Activated CD8-positive, alpha-beta T cell treated with anti-CD3 and anti-CD28 coated beads for 36 hours (primary cell): ENCODE measurements at regions of chr12 and their contacts with region 1.

Region 1: GRCh38 chr12:4276524-4277204 is 3.1 kb downstream of the CCND2 start:
- DNase-seq: peak; percentile 92
- ATAC-seq: peak; percentile 24
- H3K4me3 Mint-ChIP-seq: peak overlapping the region; percentile 100
- H3K27ac Mint-ChIP-seq: peak overlapping the region; percentile 100
- H3K4me1 Mint-ChIP-seq: peaks cover 47% of the 10 kb centered on the region
- H3K27me3 Mint-ChIP-seq: no peaks in the 10 kb centered on the region
- CTCF ChIP-seq: peak; percentile 77

Region 2: GRCh38 chr12:3885277-3886094 is 391.2 kb before region 1 on chr12:
- CTCF ChIA-PET with region 1: interaction called, 72 read pairs
- POLR2A ChIA-PET with region 1: interaction called, 9 read pairs
- intact Hi-C with region 1: loop called (anchors 2 kb)
- DNase-seq: peak; percentile 56
- ATAC-seq: no peak
- H3K4me3 Mint-ChIP-seq: no peak overlapping the region
- H3K27ac Mint-ChIP-seq: no peak overlapping the region
- H3K4me1 Mint-ChIP-seq: peaks cover 5% of the 10 kb centered on the region
- H3K27me3 Mint-ChIP-seq: no peaks in the 10 kb centered on the region
- CTCF ChIP-seq: peak; percentile 96

Region 3: DNA sequence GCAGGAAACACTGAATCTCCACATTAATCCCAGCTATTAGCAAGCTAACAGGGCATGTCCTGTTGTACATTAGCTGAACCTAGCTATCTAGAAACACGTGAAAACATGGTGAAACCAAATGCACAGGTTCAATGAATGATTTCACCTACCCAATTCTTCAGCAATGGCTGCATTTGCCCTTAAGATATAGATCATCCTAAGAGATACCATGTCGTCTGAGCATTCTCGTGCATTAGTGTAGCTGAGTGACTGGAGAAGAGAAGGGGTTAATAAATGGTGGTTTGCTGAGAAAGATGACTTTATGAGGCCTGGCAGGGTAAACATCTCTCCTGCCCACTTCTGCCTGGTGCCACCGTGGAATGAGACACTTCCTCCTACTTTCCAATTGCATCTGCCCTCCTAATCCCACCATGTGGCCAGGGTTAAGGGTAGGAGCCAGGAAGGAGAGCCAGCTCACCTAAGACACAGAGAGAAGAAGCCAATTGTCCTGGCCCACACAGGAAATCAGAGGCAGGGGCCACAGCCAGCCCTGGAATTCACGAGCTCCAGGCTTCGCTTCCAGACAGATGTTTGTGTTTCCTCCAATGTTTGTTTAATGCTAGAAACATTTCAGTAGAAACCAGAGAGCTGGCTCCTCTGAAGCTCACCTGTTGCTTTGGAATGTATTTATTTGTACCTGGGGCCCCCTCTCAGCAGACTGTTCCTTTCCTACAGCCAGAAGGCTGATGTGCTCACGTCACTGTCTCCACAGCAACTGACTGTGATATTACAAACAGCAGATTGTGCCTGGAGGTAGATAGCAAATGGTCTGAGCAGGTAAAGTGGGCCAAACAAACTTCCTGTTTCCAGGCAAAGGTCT is 277.5 kb before region 1 on chr12:
- CTCF ChIA-PET with region 1: interaction called, 136 read pairs
- POLR2A ChIA-PET with region 1: interaction called, 10 read pairs
- intact Hi-C with region 1: loop called (anchors 5 kb)
- DNase-seq: no peak
- ATAC-seq: no peak
- H3K4me3 Mint-ChIP-seq: no peak overlapping the region
- H3K27ac Mint-ChIP-seq: no peak overlapping the region
- H3K4me1 Mint-ChIP-seq: peaks cover 27% of the 10 kb centered on the region
- H3K27me3 Mint-ChIP-seq: no peaks in the 10 kb centered on the region
- CTCF ChIP-seq: no peak

Region 4: GRCh38 chr12:4112734-4113325 is 163.8 kb before region 1 on chr12:
- CTCF ChIA-PET with region 1: interaction called, 50 read pairs
- POLR2A ChIA-PET with region 1: interaction called, 97 read pairs
- intact Hi-C with region 1: loop called (anchors 2 kb)
- DNase-seq: no peak
- ATAC-seq: peak; percentile 22
- H3K4me3 Mint-ChIP-seq: no peak overlapping the region
- H3K27ac Mint-ChIP-seq: peak overlapping the region; percentile 36
- H3K4me1 Mint-ChIP-seq: peaks cover 61% of the 10 kb centered on the region
- H3K27me3 Mint-ChIP-seq: peaks cover 2% of the 10 kb centered on the region
- CTCF ChIP-seq: no peak

Region 5: DNA sequence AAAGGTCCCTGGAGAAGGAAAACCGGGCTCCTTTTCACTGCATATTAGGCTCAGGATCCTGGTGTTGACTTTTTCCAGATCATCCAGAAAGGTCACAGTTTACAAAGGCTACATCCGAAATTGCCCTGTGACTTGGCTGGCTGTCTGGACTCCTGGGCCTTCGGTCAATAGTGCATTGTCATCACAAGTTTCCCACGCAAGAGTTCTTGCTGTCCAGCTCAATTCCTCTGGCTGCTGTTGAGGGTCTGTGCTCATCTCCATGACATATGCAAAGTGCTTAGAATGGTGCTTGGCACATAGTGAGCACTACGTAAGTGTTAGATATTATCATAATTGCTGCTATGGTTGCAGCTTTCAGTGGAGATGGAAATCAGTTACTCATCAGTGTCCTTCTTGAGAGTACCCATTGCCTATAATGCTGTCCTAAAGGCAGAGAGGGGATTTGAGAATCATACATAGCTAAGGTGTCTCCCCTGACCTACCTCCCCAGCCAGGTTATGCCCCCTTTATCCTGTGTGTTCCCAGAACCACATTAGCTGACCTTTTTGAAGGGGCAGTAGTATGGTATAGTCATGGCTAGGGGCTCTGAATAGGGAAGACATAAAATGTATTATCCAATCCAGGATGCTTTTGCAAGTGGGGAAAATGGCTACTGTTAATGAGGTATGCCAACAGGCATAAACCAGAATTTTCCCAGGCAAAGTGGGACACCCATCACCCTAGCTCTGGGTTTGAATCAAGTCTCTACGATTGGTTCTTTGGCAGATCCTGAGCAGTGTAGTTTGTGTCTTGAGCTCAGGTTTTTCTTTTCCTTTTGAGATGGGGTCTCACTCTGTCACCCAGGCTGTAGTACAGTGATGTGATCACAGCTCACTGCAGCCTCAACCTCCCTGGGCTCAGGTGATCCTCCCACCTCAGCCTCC is 135.1 kb before region 1 on chr12:
- CTCF ChIA-PET with region 1: interaction called, 51 read pairs
- POLR2A ChIA-PET with region 1: interaction called, 375 read pairs
- intact Hi-C with region 1: loop called (anchors 2 kb)
- DNase-seq: peak; percentile 38
- ATAC-seq: peak; percentile 28
- H3K4me3 Mint-ChIP-seq: no peak overlapping the region
- H3K27ac Mint-ChIP-seq: peak overlapping the region; percentile 97
- H3K4me1 Mint-ChIP-seq: peaks cover 84% of the 10 kb centered on the region
- H3K27me3 Mint-ChIP-seq: no peaks in the 10 kb centered on the region
- CTCF ChIP-seq: no peak

Region 6: GRCh38 chr12:4215229-4216186 is 61.2 kb before region 1 on chr12:
- CTCF ChIA-PET with region 1: interaction called, 13 read pairs
- POLR2A ChIA-PET with region 1: interaction called, 8 read pairs
- intact Hi-C with region 1: no loop called
- DNase-seq: peak; percentile 73
- ATAC-seq: peak; percentile 82
- H3K4me3 Mint-ChIP-seq: peak overlapping the region; percentile 50
- H3K27ac Mint-ChIP-seq: peak overlapping the region; percentile 86
- H3K4me1 Mint-ChIP-seq: peaks cover 37% of the 10 kb centered on the region
- H3K27me3 Mint-ChIP-seq: no peaks in the 10 kb centered on the region
- CTCF ChIP-seq: no peak

Region 7: DNA sequence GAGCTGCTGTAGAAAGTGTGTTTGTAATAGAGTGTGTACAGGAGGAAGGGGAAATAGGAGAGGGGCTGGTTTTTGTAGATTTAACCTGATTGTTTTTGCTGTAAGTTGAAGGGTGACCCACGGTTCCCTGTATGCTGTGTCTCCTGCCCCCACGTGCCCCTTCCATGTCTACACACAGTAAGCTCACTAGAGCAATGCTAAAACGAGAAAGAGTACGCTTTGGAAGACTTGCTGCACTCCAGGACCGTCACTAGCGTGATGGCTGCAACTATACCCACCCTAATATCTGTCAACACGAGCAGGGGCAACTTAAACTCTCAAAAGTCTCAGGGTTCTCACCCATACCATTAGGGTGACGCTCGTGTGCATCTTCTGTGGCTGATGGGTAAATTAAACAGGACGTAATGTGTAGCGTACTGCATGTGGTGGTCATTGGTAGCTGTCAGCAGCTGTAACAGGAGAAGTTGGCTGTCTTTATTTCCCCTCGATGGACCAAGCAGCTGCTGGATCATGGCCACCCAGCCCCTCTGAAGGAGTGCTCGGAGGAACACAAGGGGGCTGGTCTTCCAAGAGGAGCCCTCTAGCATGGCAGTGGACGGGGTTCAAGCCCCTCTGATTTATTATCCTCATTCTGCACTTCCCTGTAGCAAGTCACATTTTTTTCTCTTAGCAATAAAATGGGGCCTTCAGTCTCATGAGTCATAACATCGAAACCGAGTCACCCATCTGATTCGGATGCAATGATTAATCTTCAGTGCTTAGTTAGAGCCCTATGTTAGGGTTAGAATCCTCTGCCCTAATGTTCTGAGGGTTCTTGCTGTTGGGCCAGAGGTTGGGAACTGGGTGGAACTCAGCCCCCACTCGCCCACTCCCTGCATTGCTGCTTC is 10.9 kb after region 1 on chr12:
- CTCF ChIA-PET with region 1: interaction called, 53 read pairs
- POLR2A ChIA-PET with region 1: interaction called, 49 read pairs
- intact Hi-C with region 1: no loop called
- DNase-seq: no peak
- ATAC-seq: peak; percentile 49
- H3K4me3 Mint-ChIP-seq: no peak overlapping the region
- H3K27ac Mint-ChIP-seq: peak overlapping the region; percentile 84
- H3K4me1 Mint-ChIP-seq: peaks cover 90% of the 10 kb centered on the region
- H3K27me3 Mint-ChIP-seq: no peaks in the 10 kb centered on the region
- CTCF ChIP-seq: no peak

Region 8: DNA sequence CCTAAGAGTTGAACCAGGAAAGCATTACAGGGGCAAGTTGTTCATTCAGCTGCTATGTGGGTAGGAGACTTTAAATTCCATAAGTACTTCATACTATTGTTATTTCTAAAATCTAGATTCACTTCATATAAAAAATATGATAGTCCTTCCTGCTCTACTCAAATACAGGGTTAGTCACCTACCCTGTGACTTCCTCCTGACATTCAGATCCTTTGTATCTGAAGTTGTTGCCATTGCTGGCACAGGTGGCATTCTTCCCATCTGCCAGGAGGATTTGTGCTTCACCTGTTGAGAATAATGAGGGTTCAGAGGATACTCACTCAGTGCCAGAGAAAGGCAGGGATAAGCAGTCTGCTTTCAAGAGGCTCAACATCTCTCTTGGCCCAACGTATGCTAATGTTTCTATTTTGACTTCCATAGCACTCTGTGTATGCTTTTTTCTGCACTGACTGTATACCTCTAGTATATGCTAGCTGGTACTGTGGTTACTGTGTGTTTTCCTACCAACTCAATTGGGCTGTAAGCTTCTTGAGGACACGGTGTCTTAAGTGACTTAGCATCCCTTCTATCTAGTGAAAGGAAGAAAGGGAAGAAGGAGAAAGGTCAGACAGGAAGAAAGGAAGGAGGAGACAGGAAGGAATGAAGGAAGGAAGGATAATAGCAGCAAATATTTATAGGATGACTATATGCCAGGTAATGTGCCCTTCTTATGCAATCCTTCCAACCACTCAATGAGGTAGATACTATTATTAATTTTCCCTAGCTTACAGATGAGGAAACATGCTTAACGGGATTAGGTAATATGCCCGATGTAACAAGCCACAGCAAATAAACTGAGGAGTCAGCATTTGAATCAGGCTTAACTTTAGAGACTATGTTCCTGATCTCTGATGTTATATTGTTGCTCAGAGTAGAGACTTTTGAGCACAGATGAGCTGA is 207.5 kb after region 1 on chr12:
- CTCF ChIA-PET with region 1: no interaction called
- POLR2A ChIA-PET with region 1: no interaction called
- intact Hi-C with region 1: no loop called
- DNase-seq: no peak
- ATAC-seq: no peak
- H3K4me3 Mint-ChIP-seq: no peak overlapping the region
- H3K27ac Mint-ChIP-seq: no peak overlapping the region
- H3K4me1 Mint-ChIP-seq: peaks cover 15% of the 10 kb centered on the region
- H3K27me3 Mint-ChIP-seq: no peaks in the 10 kb centered on the region
- CTCF ChIP-seq: no peak